ENCODE measurements at regions of chr7 and their contacts with region 1.

Region 1: GRCh38 chr7:116525913-116526861 is 1.4 kb downstream of the CAV1 start:
- DNase-seq: peak; percentile 71
- H3K4me3 Mint-ChIP-seq: peak overlapping the region; percentile 78
- H3K27ac Mint-ChIP-seq: no peak overlapping the region
- H3K4me1 Mint-ChIP-seq: peaks cover 21% of the 10 kb centered on the region
- H3K27me3 Mint-ChIP-seq: peaks cover 67% of the 10 kb centered on the region

Region 2: DNA sequence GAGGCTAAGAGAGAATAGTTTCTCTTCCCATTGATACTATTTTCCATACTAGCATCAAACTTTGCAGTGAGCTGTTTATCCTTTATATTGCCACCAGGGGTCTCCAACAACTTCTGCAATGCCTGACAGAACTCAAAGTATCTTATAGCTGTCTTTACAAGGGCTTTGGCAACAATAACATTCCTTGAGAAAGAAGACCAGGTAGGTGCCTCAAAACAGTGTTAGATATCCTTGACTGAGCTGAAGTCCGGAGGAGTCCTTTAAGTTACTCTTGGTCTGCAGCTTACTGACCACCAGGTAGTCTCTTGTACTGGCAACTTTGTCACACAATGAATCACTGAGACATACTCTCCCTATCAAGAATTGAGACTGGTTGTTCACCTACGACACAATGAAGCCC is 345.9 kb before region 1 on chr7:
- CTCF ChIA-PET with region 1: interaction called, 19 read pairs
- POLR2A ChIA-PET with region 1: no interaction called
- intact Hi-C with region 1: no loop called
- DNase-seq: peak; percentile 15
- H3K4me3 Mint-ChIP-seq: no peak overlapping the region
- H3K27ac Mint-ChIP-seq: no peak overlapping the region
- H3K4me1 Mint-ChIP-seq: no peaks in the 10 kb centered on the region
- H3K27me3 Mint-ChIP-seq: no peaks in the 10 kb centered on the region

Region 3: DNA sequence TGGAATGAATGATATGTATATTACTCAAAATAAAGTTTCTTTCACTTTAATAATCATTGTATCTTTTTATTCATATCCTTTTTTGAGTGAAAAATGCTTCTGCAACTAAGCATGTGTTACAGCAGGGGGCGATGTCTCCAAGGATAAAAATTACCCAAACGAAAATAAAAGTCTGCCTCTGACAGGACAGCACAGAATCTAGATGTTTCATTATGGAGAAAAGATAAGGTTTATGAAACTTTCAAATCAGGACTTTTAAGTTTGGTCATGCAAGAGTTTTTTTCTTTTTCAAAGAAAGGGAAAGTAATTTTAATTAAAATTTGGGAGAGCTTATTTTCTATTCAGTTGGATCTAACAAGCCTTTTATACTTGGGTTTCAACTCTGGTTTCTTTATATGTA is 267.5 kb before region 1 on chr7:
- CTCF ChIA-PET with region 1: interaction called, 32 read pairs
- POLR2A ChIA-PET with region 1: no interaction called
- intact Hi-C with region 1: loop called (anchors 1 kb)
- DNase-seq: no peak
- H3K4me3 Mint-ChIP-seq: no peak overlapping the region
- H3K27ac Mint-ChIP-seq: no peak overlapping the region
- H3K4me1 Mint-ChIP-seq: peaks cover 12% of the 10 kb centered on the region
- H3K27me3 Mint-ChIP-seq: no peaks in the 10 kb centered on the region

Region 4: GRCh38 chr7:116478834-116479233 is 47.4 kb before region 1 on chr7:
- CTCF ChIA-PET with region 1: no interaction called
- POLR2A ChIA-PET with region 1: no interaction called
- intact Hi-C with region 1: no loop called
- DNase-seq: no peak
- H3K4me3 Mint-ChIP-seq: no peak overlapping the region
- H3K27ac Mint-ChIP-seq: no peak overlapping the region
- H3K4me1 Mint-ChIP-seq: no peaks in the 10 kb centered on the region
- H3K27me3 Mint-ChIP-seq: peaks cover 14% of the 10 kb centered on the region

Region 5: DNA sequence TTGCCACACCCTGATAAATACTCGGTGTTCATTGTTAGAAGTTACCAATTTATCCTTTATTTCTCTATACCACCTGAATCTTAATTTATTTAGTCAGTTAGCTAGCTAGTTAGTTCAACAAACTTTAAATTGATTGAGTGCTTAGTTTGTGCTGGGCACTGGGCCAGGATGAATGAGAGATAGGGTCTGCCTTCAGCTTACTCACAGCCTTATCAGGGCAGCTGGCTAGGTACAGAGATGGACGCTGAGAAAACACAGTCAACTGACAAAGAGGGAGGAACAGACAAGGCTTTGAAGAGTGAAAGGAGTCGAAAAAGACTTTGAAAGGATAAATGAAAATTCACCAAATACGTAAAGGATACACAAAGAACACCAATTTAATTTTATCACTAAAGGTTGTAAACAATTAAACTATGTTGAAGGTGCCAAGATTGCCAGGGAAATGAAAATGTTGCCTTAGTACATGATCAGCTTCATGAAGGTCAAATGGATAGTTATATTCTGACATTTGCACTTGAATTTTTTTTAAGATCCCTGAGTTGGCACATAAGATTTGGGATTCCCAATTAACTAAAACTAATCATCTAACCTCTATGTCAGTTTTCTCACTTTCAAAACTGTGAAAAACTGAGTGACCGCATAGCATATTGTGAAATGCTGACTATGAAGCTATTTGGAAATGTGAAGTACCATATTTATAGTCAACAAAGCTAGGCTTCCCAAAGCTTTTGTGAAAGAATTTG is 24.6 kb before region 1 on chr7:
- CTCF ChIA-PET with region 1: interaction called, 10 read pairs
- POLR2A ChIA-PET with region 1: interaction called, 3 read pairs
- intact Hi-C with region 1: no loop called
- DNase-seq: no peak
- H3K4me3 Mint-ChIP-seq: no peak overlapping the region
- H3K27ac Mint-ChIP-seq: no peak overlapping the region
- H3K4me1 Mint-ChIP-seq: peaks cover 10% of the 10 kb centered on the region
- H3K27me3 Mint-ChIP-seq: peaks cover 49% of the 10 kb centered on the region

Region 6: DNA sequence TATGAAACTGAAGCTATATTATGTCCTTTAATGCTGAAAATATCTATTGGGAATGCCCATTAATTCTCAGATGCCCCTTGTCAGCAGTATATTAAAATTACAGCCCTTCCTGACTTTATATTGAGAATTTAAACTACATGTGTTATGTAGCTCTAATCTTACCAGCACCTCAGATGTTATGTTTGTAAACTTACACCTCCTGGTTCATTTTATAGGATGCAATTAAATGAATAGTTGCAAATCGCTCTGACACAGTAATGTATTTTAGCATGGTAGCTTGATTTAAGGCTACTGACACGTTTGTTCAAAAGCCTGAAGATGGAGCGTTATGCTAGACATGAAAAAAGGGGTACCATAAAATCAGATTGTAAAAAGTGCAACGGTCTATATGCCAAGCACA is 110.8 kb after region 1 on chr7:
- CTCF ChIA-PET with region 1: no interaction called
- POLR2A ChIA-PET with region 1: no interaction called
- intact Hi-C with region 1: no loop called
- DNase-seq: no peak
- H3K4me3 Mint-ChIP-seq: no peak overlapping the region
- H3K27ac Mint-ChIP-seq: no peak overlapping the region
- H3K4me1 Mint-ChIP-seq: no peaks in the 10 kb centered on the region
- H3K27me3 Mint-ChIP-seq: peaks cover 2% of the 10 kb centered on the region

Region 7: DNA sequence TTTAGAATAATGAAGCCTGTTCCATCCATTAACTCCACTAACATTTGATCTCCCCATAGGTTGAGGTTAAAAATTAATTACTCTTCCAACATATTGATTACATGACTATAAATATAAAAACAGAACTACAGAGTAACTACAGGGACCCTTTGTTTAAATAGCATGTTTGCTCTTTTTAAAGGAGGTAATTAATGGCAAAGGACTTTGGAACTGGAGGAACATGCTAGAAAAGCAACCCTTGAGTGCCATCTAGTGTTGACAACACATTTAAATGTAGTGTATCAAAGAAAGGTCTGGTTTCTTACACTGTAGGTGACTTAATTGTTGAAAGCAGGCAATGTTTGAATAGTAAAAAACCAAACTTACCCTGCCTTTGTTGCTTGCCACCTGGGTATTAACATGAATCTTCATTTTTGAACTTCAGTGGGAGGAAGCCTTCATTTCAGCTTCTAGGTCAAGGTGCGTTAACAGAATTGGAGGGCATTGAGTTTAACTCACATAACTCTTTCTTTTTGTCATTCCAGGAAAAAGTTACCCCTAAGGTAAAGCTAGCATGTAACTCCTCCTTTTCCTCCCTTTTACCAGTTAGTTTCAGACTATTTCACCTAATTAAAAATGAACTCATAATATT is 283.6 kb after region 1 on chr7:
- CTCF ChIA-PET with region 1: interaction called, 3 read pairs
- POLR2A ChIA-PET with region 1: no interaction called
- intact Hi-C with region 1: loop called (anchors 10 kb)
- DNase-seq: no peak
- H3K4me3 Mint-ChIP-seq: no peak overlapping the region
- H3K27ac Mint-ChIP-seq: no peak overlapping the region
- H3K4me1 Mint-ChIP-seq: no peaks in the 10 kb centered on the region
- H3K27me3 Mint-ChIP-seq: no peaks in the 10 kb centered on the region

Measured in activated CD4-positive, alpha-beta memory T cell treated with anti-CD3 and anti-CD28 coated beads for 36 hours (primary cell).